Right ventricle myocardium superior (tissue), 1 donor: ENCODE measurements at regions of chr5 and their contacts with region 1.

Region 1: GRCh38 chr5:177403792-177404640 is 3.6 kb upstream of the PFN3 start:
- DNase-seq: peak; percentile 93
- ATAC-seq: peak; percentile 97

Region 2: DNA sequence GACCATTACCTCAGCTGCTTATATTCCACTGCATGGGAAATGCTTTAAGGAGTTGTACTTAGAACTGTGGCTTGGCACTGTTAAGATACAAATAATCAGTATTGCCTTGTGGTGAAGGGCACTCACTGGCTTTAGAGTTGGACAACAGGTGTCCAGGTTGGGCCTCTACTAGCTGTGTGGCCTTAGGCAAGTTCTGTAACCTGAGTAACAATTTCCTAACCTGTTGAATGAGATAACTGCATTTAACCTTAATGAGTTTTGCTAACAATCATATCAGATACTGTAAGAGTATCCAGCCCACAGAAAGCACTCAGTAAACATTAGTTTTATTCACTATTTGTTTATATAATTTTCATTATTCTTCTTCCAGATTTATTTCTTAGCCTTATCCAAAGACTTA is 487.7 kb before region 1 on chr5:
- intact Hi-C with region 1: no loop called
- DNase-seq: no peak
- ATAC-seq: no peak

Region 3: DNA sequence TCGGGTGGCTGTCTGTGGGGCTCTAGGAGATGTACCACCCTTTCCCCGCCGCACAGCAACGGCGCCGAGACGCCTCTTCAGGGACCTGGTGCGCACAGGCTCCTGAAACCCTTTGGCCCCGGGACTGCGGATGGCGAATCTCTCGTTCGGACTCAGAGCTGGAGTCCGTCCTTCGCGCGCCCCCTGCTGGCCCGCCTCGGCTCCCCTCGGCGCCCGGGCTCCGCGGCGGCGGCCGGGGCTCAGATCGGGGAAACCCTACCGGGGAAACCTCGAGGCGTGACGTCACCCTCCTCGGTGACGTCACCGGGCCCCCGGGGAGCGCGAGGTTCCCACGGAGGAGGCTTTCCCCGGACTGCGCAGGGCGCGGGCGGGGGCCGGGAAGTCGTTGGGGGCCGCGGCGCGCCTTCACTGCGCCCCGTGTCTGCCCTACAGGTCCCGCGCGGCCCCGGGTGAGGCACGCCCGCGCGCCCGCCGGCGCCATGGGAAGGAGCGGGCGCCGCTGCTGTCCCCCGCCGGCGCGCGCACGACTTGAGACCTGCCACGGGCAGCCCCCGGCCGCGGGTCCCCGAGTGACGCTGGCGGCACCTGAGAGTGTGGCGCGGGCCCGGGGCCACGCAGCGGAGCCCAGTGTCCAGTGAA is 50.5 kb after region 1 on chr5:
- intact Hi-C with region 1: loop called (anchors 2 kb)
- DNase-seq: peak; percentile 94
- ATAC-seq: peak; percentile 77

Region 4: DNA sequence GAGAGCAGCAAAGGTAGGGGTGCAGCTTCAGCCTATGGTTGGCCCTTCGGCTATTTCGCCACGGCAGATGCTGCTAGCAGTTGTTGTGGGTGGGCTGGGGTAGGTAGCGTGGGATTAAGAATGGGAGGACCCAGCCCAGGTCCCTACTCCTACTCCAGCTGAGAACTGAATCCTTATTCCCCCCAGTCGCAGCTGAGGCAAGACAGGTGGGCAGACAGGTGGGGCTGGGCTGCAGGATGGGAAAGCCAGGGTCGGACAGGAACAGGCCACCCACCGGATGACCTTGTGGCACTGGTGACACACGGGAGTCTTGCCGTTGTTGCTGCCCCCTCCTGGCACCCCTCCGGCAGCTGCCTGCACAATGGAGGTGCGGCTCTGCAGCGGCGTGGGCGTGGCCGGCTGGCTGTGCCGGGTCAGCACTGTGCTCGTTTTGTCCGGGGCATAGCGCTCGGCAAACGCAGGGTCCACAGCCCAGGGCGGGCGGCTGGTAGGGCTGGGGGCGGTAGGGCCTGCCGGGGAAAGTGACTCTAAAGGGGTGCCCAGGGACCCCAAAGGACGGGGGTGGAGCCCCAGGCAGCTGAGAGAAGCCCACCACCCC is 85.2 kb after region 1 on chr5:
- intact Hi-C with region 1: no loop called
- DNase-seq: no peak
- ATAC-seq: no peak